ENCODE measurements at regions of chr16 and their contacts with region 1.

Region 1: DNA sequence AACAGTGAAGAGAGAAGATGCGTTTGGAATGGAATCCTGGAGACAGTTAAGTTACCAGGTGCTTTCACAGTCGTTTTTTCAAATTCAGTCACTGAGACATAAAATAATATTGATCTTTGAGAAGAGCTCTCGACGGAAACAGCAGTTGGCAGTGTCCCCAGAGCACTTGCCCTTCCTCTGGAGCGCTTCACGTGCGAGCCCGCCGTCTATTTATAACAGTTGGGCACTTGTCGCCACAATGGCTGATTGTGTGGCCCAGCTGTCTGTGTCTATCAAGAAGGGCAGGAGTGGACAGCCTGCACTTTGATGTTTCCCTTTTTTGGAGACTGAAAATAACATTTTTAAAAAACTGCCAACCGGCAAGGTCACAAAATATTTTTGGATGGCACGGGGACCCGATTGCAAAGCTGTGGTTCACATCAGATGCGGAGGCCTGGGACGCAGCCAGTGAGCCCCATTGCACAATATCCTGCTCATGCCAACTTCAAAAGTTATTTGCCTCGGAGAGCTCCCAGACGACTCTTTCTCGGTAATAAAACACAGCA is 62.9 kb downstream of the ADCY9 start:
- DNase-seq: peak; percentile 87
- ATAC-seq: peak; percentile 73
- H3K4me3 ChIP-seq: peak overlapping the region; percentile 24
- H3K27ac ChIP-seq: peak overlapping the region; percentile 73
- H3K4me1 ChIP-seq: peaks cover 37% of the 10 kb centered on the region
- H3K27me3 ChIP-seq: no peaks in the 10 kb centered on the region
- CTCF ChIP-seq: no peak

Region 2: DNA sequence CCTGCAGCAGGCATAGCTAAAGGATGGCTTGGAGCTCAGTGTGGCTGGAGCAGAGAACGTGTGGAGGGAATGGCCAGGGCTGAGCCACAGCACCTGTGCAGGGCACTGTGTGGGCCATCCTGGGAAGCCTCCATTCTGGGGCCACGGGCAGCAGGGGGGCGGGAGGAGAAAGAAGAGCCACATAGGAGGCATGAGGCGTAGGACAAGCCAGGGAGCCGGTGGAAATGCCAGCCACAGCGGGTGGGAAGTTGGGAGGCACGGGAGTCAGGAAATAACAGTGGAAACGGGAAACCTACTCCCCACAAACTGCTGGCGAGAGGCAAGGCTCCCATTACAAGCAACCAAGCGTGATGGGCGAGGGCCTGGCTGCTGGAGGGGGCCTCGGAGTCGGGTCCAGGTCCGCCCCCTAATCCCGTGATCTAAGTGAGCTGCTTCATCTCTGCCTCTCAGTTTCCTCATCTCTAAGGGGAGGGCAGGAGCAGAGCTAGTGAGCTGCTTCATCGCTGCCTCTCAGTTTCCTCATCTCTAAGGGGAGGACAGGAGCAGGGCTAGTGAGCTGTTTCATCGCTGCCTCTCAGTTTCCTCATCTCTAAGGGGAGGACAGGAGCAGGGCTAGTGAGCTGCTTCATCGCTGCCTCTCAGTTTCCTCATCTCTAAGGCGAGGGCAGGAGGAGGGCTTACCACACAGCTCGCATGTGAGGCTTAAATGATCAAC is 42.0 kb before region 1 on chr16:
- intact Hi-C with region 1: no loop called
- DNase-seq: no peak
- ATAC-seq: peak; percentile 6
- H3K4me3 ChIP-seq: no peak overlapping the region
- H3K27ac ChIP-seq: peak overlapping the region; percentile 45
- H3K4me1 ChIP-seq: peaks cover 21% of the 10 kb centered on the region
- H3K27me3 ChIP-seq: no peaks in the 10 kb centered on the region
- CTCF ChIP-seq: no peak

Region 3: GRCh38 chr16:4116337-4117249 is 63.2 kb after region 1 on chr16 and contains the start of gene ADCY9:
- intact Hi-C with region 1: loop called (anchors 10 kb)
- DNase-seq: peak; percentile 91
- ATAC-seq: peak; percentile 91
- H3K4me3 ChIP-seq: peak within 1 kb of the TSS; percentile 76
- H3K27ac ChIP-seq: peak within 1 kb of the TSS; percentile 80
- H3K4me1 ChIP-seq: peaks cover 28% of the 10 kb centered on the region
- H3K27me3 ChIP-seq: no peaks in the 10 kb centered on the region
- CTCF ChIP-seq: no peak
- total RNA-seq, gene ADCY9: 49.6 TPM